GM12878 (cell line): ENCODE measurements at regions of chr1 and their contacts with region 1.

Region 1: DNA sequence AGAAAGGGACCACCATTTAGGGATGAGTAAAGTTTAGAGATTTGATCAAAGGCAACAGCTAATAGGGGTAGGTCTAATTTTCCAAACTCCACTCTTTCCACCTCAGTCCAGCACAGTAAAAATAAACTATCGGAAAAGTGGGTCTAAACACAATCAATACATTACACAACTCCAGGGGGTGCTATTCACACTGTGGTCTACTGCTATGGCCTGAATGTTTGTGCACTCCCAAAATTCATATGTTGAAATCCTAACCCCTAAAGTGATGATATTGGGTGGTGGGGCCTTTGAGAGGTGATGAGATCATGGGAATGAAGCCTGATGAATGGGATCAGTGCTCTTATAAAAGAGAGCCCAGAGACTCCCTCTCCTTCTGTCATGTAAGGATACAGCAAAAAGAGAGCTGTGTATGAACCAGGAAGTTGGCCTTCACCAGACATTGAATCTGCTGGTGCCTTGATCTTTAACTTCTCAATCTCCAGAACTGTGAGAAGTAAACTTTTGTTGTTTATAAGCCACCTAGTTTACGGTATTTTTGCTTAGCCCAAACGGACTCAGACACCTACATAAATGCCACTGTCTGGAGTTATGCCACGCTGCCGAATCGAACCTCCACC is 193.9 kb downstream of the OMA1 start:
- DNase-seq: no peak
- ATAC-seq: no peak
- H3K4me3 ChIP-seq: no peak overlapping the region
- H3K27ac ChIP-seq: no peak overlapping the region
- H3K4me1 ChIP-seq: no peaks in the 10 kb centered on the region
- H3K27me3 ChIP-seq: no peaks in the 10 kb centered on the region
- CTCF ChIP-seq: no peak
- EP300 ChIP-seq: no peak
- POLR2A ChIP-seq: no peak
- RAD21 ChIP-seq: no peak

Region 2: GRCh38 chr1:58324558-58324957 is 28.0 kb before region 1 on chr1:
- CTCF ChIA-PET with region 1: no interaction called
- POLR2A ChIA-PET with region 1: no interaction called
- RAD21 ChIA-PET with region 1: no interaction called
- SMC1A ChIA-PET with region 1: no interaction called
- in situ Hi-C with region 1: no loop called
- intact Hi-C with region 1: loop called (anchors 1 kb)
- DNase-seq: no peak
- ATAC-seq: no peak
- H3K4me3 ChIP-seq: no peak overlapping the region
- H3K27ac ChIP-seq: no peak overlapping the region
- H3K4me1 ChIP-seq: no peaks in the 10 kb centered on the region
- H3K27me3 ChIP-seq: no peaks in the 10 kb centered on the region
- CTCF ChIP-seq: no peak
- EP300 ChIP-seq: no peak
- POLR2A ChIP-seq: no peak
- RAD21 ChIP-seq: no peak

Region 3: GRCh38 chr1:58392083-58392482 is 39.5 kb after region 1 on chr1:
- CTCF ChIA-PET with region 1: no interaction called
- POLR2A ChIA-PET with region 1: no interaction called
- RAD21 ChIA-PET with region 1: no interaction called
- SMC1A ChIA-PET with region 1: no interaction called
- in situ Hi-C with region 1: no loop called
- intact Hi-C with region 1: loop called (anchors 1 kb)
- DNase-seq: peak; percentile 35
- ATAC-seq: peak; percentile 95
- H3K4me3 ChIP-seq: no peak overlapping the region
- H3K27ac ChIP-seq: no peak overlapping the region
- H3K4me1 ChIP-seq: peaks cover 17% of the 10 kb centered on the region
- H3K27me3 ChIP-seq: no peaks in the 10 kb centered on the region
- CTCF ChIP-seq: no peak
- EP300 ChIP-seq: peak; percentile 43 to 71; a peak in 2 of 4 replicates
- POLR2A ChIP-seq: no peak
- RAD21 ChIP-seq: no peak